Activated CD4-positive, alpha-beta memory T cell treated with anti-CD3 and anti-CD28 coated beads for 36 hours (primary cell): ENCODE measurements at regions of chr7 and their contacts with region 1.

Region 1: DNA sequence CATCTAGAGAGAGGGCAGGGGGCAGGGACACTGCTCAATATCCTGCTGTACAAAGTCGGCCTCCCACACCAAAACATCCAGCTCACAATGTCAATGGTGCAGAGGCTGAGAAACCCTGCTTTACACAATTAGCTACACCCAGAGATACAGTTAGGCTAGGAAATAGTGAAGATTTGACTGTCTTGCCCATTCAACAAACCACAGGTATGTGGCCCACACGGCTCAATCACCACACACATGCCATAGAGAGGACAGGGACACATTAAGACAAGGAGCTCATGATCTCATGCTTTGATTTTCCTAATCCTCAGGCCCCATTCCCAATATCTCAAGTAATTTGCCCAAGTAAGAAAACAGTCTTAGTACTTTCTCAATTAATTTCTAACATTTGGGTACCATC is 110.4 kb downstream of the OSBPL3 start:
- DNase-seq: no peak
- H3K4me3 Mint-ChIP-seq: no peak overlapping the region
- H3K27ac Mint-ChIP-seq: no peak overlapping the region
- H3K4me1 Mint-ChIP-seq: peaks cover 39% of the 10 kb centered on the region
- H3K27me3 Mint-ChIP-seq: no peaks in the 10 kb centered on the region

Region 2: GRCh38 chr7:24825931-24826661 is 43.5 kb before region 1 on chr7:
- CTCF ChIA-PET with region 1: interaction called, 7 read pairs
- POLR2A ChIA-PET with region 1: interaction called, 4 read pairs
- intact Hi-C with region 1: loop called (anchors 1 kb)
- DNase-seq: no peak
- H3K4me3 Mint-ChIP-seq: peak overlapping the region; percentile 28
- H3K27ac Mint-ChIP-seq: peak overlapping the region; percentile 43
- H3K4me1 Mint-ChIP-seq: peaks cover 67% of the 10 kb centered on the region
- H3K27me3 Mint-ChIP-seq: no peaks in the 10 kb centered on the region

Region 3: GRCh38 chr7:24965831-24966709 is 96.5 kb after region 1 on chr7:
- CTCF ChIA-PET with region 1: interaction called, 5 read pairs
- POLR2A ChIA-PET with region 1: no interaction called
- intact Hi-C with region 1: loop called (anchors 1 kb)
- DNase-seq: peak; percentile 61
- H3K4me3 Mint-ChIP-seq: peak overlapping the region; percentile 36
- H3K27ac Mint-ChIP-seq: peak overlapping the region; percentile 80
- H3K4me1 Mint-ChIP-seq: peaks cover 82% of the 10 kb centered on the region
- H3K27me3 Mint-ChIP-seq: no peaks in the 10 kb centered on the region

Region 4: GRCh38 chr7:25028370-25029021 is 158.9 kb after region 1 on chr7:
- CTCF ChIA-PET with region 1: no interaction called
- POLR2A ChIA-PET with region 1: no interaction called
- intact Hi-C with region 1: loop called (anchors 5 kb)
- DNase-seq: peak; percentile 42
- H3K4me3 Mint-ChIP-seq: peak overlapping the region; percentile 0
- H3K27ac Mint-ChIP-seq: peak overlapping the region; percentile 70
- H3K4me1 Mint-ChIP-seq: peaks cover 48% of the 10 kb centered on the region
- H3K27me3 Mint-ChIP-seq: no peaks in the 10 kb centered on the region

Region 5: DNA sequence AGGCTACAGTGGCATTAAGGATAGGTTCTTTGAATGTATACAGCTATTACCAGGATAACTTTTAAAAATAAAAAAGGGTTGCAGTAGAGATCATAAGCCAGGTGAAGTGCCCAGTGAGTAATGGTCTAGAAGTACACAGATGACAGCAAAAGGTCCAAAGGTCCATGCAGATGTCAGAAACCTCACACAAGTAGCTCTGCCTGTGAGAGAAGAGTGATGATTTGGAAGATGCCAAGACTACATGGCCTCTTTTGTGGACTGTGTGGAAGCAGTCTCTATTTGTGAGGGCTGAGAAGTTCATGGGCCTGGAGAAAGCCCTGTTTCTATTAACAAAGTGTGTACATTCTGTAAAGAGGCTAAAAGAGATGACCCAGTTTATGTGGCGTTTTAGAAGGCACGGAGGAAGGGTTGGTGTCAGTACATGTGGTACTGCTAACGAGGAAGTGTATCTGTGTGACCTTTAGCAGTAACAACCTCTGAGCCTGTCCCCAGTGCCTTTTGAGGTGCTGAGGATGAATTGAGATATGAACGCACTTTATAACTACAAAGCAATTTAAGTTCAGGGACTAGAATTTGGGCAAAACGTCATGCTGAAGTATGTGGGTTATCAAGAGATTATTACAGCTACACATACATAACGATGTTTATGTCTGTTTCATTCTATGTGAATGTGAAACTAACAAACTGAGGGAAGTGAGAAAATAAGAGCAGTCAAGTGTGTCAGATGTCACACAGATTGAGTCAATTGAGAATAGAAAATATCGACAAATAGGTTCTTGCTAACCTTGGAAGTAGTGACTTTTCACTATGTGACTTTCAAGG is 247.9 kb after region 1 on chr7:
- CTCF ChIA-PET with region 1: no interaction called
- POLR2A ChIA-PET with region 1: no interaction called
- intact Hi-C with region 1: loop called (anchors 1 kb)
- DNase-seq: no peak
- H3K4me3 Mint-ChIP-seq: peak overlapping the region; percentile 16
- H3K27ac Mint-ChIP-seq: peak overlapping the region; percentile 77
- H3K4me1 Mint-ChIP-seq: peaks cover 48% of the 10 kb centered on the region
- H3K27me3 Mint-ChIP-seq: no peaks in the 10 kb centered on the region